ENCODE measurements at regions of chr5 and their contacts with region 1.

Region 1: GRCh38 chr5:139633295-139634027 is 14.7 kb upstream of the CXXC5 start:
- DNase-seq: no peak
- H3K4me3 ChIP-seq: no peak overlapping the region
- H3K27me3 ChIP-seq: no peaks in the 10 kb centered on the region
- CTCF ChIP-seq: peak; percentile 97

Region 2: DNA sequence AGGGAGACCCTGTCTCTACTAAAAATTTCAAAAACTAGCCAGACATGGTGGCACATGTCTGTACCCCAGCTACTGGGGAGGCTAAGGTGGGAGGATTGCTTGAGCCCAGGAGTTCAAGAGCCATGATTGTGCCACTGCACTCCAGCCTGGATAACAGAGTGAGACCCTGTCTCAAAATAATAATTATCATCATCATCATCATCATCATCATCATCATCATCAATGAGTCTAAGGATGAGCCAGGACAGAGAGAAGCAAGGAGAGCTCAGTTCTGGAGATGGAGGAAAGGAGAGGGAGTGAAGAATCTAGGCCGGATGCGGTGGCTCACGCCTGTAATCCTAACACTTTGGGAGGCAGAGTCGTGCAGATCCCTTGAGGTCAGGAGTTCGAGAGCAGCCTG is 376.6 kb before region 1 on chr5:
- CTCF ChIA-PET with region 1: no interaction called
- POLR2A ChIA-PET with region 1: no interaction called
- DNase-seq: no peak
- H3K4me3 ChIP-seq: no peak overlapping the region
- H3K27me3 ChIP-seq: peaks cover 5% of the 10 kb centered on the region
- CTCF ChIP-seq: no peak

Region 3: GRCh38 chr5:139651853-139652787 is 18.7 kb after region 1 on chr5:
- CTCF ChIA-PET with region 1: interaction called, 137 read pairs
- POLR2A ChIA-PET with region 1: interaction called, 14 read pairs
- DNase-seq: peak; percentile 52
- H3K4me3 ChIP-seq: peak overlapping the region; percentile 24
- H3K27me3 ChIP-seq: no peaks in the 10 kb centered on the region
- CTCF ChIP-seq: no peak

Region 4: GRCh38 chr5:139684881-139685749 is 51.7 kb after region 1 on chr5:
- CTCF ChIA-PET with region 1: interaction called, 201 read pairs
- POLR2A ChIA-PET with region 1: no interaction called
- DNase-seq: no peak
- H3K4me3 ChIP-seq: no peak overlapping the region
- H3K27me3 ChIP-seq: no peaks in the 10 kb centered on the region
- CTCF ChIP-seq: peak; percentile 9; the same call in 1 of the 2 replicates

Region 5: DNA sequence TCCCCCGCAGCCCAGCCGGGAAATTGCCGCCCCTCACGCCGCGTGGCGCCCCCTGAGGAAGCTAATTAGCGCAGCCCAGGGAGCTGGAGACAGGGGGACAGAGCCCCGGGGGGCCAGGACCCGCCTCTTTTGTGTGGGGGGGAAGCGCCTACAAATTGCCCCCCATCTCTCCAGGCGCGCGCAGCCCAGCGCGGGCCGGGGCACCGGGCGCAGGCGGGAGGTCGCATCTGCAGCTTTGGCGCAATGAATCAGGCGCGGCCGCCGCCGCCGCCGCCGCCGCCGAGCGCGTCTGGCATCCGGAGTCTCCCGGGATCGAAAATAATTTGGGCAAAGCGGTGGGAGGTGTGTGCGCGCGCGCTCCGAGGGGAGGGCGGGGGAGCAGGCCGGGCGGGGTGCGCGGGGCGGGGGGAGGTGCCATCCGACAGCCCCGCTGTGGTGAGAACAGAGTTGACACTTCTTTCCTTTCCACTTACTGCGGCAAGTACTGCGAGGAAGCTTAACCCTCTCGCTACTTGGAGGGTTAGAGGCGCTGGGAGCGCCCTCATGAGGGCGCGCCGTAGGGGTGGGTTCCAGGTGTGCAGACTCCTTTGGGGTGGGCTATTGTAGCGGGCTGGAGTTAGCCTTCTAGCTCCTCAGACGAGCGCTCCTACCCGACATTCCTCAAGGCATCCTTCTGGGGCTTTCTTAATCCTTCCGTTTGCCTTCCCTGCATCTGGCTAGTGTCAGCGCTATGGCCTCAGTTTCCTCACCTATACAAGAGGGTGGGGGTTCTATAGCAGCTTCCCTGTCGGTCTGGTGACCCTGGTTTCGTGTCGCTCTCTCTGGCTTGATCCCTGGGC is 77.8 kb after region 1 on chr5:
- CTCF ChIA-PET with region 1: interaction called, 14 read pairs
- POLR2A ChIA-PET with region 1: no interaction called
- DNase-seq: no peak
- H3K4me3 ChIP-seq: peak overlapping the region; percentile 44
- H3K27me3 ChIP-seq: no peaks in the 10 kb centered on the region
- CTCF ChIP-seq: peak; percentile 28

Region 6: DNA sequence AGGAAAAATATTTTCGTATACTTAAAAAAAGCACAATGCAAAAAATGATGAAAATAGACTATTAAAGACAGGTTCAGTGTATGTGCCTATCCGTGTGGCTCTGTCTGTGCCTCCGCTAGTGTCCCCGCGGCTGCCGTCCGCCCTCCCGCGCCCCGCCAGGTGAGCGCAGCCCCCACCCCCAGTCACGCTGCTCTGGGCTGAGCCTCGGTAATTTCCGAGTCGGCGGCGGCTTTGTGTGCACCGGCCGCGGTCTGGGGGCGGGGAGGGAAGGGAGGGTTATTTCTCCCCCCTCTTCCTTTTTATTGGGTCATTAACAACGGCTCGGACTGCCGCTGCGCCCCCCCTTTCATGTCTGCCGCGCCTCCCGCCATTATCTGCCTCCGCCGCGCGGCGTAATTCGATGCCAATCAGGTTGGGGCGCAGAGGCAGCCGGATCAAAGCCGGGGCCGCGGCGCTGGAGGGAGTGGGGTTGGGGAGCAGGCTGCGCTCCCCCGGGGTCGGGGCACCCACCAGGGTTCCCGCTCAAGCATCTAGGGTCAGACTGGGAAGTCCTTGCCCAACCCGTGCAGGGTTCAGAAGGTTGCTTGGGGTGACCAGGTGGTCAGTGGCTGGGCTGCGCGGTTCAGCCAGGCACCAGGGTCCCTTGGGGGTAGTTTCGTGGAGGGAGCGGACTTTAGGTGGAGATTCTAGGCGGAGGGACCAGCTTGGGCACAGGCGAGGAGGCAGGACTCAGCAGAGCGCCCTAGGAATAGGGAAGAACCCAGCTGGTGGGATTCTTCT is 122.6 kb after region 1 on chr5:
- CTCF ChIA-PET with region 1: interaction called, 498 read pairs
- POLR2A ChIA-PET with region 1: no interaction called
- DNase-seq: no peak
- H3K4me3 ChIP-seq: no peak overlapping the region
- H3K27me3 ChIP-seq: peaks cover 9% of the 10 kb centered on the region
- CTCF ChIP-seq: no peak

Region 7: GRCh38 chr5:139787568-139788293 is 154.3 kb after region 1 on chr5:
- CTCF ChIA-PET with region 1: interaction called, 18 read pairs
- POLR2A ChIA-PET with region 1: no interaction called
- DNase-seq: peak; percentile 9
- H3K4me3 ChIP-seq: peak overlapping the region; percentile 45
- H3K27me3 ChIP-seq: peaks cover 5% of the 10 kb centered on the region
- CTCF ChIP-seq: peak; percentile 98

Measured in BJ (cell line).